ENCODE measurements at regions of chr9 and their contacts with region 1.

Region 1: DNA sequence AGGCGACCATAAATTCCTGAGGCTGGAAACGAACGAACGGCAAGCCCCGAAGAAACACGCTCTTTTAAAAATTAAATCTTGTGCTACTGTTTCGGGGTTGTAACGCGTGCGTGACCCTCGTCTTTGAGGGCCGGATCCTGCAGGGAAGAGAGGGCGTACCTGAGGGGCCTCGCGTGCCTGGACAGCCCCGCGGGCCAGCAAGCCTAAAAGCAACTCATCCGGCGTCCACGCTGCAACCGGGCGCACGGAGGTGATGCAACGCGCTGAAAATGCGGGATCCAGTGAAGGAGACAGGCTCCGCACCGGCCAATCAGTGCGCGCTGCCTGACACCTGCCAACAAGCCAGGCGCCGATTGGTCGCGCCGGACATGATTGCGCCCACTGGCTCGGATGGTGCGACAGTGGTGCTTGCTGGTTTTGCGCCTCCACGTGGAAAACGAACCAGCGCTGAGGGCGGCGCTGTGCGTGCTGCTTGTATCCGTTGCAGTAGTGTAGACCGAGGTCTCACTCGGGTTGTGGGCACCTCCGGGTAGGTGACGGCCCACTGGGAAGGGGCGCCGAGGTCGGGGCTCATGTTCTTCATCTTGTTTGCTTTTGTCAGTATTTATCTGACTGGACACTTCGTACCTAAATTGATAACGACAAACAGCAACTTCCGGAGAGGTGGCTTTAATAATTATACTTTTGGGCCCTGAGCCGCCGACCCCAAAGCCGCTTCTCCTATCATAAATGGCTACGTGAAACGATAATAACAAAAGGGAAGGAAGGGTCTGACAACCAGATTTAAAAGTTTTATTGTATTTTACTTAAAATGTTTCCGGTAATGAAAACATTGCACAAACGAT is at the start of gene IARS1:
- DNase-seq: peak; percentile 94 to 100
- H3K4me3 ChIP-seq: peak within 1 kb of the TSS; percentile 95
- H3K27ac ChIP-seq: peak within 1 kb of the TSS; percentile 96
- H3K4me1 ChIP-seq: peaks cover 22% of the 10 kb centered on the region
- H3K27me3 ChIP-seq: no peaks in the 10 kb centered on the region
- CTCF ChIP-seq: no peak; the same call in 1 of the 2 replicates
- total RNA-seq, gene IARS1: 232 and 246 TPM in 2 replicates

Region 2: GRCh38 chr9:92276331-92277032 is 17.2 kb before region 1 on chr9:
- CTCF ChIA-PET with region 1: interaction called, 11 read pairs
- POLR2A ChIA-PET with region 1: no interaction called
- intact Hi-C with region 1: no loop called
- DNase-seq: no peak
- H3K4me3 ChIP-seq: no peak overlapping the region
- H3K27ac ChIP-seq: no peak overlapping the region
- H3K4me1 ChIP-seq: no peaks in the 10 kb centered on the region
- H3K27me3 ChIP-seq: no peaks in the 10 kb centered on the region
- CTCF ChIP-seq: no peak

Measured in PC-9 (cell line).